ENCODE measurements at regions of chr11 and their contacts with region 1.

Region 1: GRCh38 chr11:79062814-79063762 is 377.7 kb downstream of the TENM4 start:
- DNase-seq: peak; percentile 46
- H3K4me3 ChIP-seq: no peak overlapping the region
- H3K27ac ChIP-seq: no peak overlapping the region
- H3K4me1 ChIP-seq: no peaks in the 10 kb centered on the region
- H3K27me3 ChIP-seq: peaks cover 0 to 6% of the 10 kb centered on the region in 2 experiments
- CTCF ChIP-seq: peak; percentile 53 to 63
- POLR2A ChIP-seq: no peak

Region 2: DNA sequence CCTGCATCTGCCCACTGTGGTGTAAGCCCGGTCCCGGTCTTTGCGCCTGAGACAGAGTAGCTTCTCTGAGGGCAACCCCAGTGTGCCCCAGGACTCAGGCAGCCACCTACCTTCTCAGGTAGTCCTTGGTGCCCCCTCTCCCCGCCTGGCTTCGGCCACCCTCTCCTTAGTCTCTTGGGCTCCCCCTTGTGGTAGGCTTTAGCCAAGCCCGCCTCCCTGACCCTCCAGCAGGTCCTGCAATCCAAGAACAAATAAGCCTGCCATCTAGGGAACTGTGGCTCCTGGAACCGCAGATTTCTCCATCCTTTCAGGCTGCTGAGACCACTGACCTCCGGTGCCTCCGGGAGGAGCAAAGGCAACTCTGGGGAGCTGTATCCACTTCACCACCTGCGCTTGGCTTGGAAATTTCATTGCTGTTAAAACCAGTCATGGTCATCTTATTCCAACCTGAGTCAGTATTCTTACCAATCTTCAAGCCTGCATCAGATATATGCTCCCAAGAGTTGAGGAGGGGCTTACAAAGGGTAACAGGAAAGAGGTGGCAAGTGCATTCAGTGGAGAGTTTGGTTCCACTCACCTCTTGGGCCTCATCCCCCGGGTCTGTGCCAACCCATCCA is 430.6 kb after region 1 on chr11:
- CTCF ChIA-PET with region 1: no interaction called
- POLR2A ChIA-PET with region 1: no interaction called
- dilution Hi-C with region 1: no loop called
- intact Hi-C with region 1: loop called (anchors 5 kb)
- DNase-seq: peak; percentile 40
- H3K4me3 ChIP-seq: no peak overlapping the region
- H3K27ac ChIP-seq: no peak overlapping the region
- H3K4me1 ChIP-seq: no peaks in the 10 kb centered on the region
- H3K27me3 ChIP-seq: no peaks in the 10 kb centered on the region
- CTCF ChIP-seq: peak; percentile 64 to 79
- POLR2A ChIP-seq: no peak